ENCODE measurements at regions of chr2 and their contacts with region 1.

Region 1: GRCh38 chr2:42944779-42945415 is 152.5 kb upstream of the HAAO start:
- DNase-seq: peak; percentile 56
- H3K4me3 ChIP-seq: no peak overlapping the region
- H3K27ac ChIP-seq: no peak overlapping the region
- H3K4me1 ChIP-seq: peaks cover 1 to 3% of the 10 kb centered on the region in 2 experiments; a peak in 2 of 4 replicates
- H3K27me3 ChIP-seq: no peaks in the 10 kb centered on the region
- CTCF ChIP-seq: no peak
- EP300 ChIP-seq: no peak
- RAD21 ChIP-seq: no peak

Region 2: DNA sequence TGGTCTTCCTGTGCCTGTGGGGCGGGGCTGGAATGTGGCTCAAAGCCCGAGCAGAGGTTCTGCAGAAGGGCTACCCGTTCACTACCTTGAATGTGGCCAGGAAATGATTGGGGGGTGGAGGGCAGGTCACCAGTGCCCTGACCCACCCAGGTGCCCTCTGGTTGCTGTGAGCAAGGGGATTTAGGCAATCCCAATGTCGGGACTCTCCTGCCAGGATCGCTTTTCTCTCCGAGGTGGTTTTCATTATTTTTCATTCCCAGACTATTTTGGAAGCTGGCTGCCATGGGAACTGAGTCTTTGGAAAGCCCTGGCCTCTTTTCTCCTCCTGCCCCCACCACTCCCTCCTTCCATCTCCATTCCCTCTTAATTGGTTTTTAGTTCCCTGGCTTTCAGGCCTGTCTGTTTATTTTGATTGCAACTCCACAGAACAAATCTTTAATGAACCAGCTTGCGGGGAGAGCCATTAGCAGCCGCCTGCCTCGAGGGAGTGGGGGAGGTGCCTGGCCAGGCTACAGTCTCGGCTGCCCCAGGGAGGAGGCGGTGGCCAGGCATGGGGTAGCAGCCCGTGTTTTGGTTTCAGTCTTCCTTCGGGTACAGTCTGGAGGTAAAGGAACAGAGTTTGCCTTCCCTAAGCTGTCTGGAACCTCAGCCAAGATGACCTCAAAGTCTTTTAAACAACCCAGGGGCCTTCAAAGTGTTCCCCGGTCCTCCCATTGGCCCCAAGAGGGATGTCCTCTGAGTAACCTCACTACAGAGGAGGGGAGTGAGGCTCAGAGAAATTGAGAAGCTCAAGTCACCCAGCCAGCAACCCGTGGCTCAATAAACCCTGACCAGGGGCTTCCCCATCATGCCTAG is 38.1 kb before region 1 on chr2:
- CTCF ChIA-PET with region 1: interaction called, 21 read pairs
- POLR2A ChIA-PET with region 1: no interaction called
- DNase-seq: peak; percentile 85
- H3K4me3 ChIP-seq: no peak overlapping the region
- H3K27ac ChIP-seq: peak overlapping the region in 1 of 2 experiments; percentile 90; a peak in 2 of 4 replicates
- H3K4me1 ChIP-seq: peaks cover 10 to 40% of the 10 kb centered on the region in 2 experiments
- H3K27me3 ChIP-seq: no peaks in the 10 kb centered on the region
- CTCF ChIP-seq: no peak
- EP300 ChIP-seq: peak in 1 of 2 experiments; percentile 82; a peak in 1 of 4 replicates
- RAD21 ChIP-seq: no peak

Region 3: GRCh38 chr2:42964439-42965083 is 19.7 kb after region 1 on chr2:
- CTCF ChIA-PET with region 1: interaction called, 53 read pairs
- POLR2A ChIA-PET with region 1: no interaction called
- DNase-seq: no peak
- H3K4me3 ChIP-seq: no peak overlapping the region
- H3K27ac ChIP-seq: peak overlapping the region; percentile 43 to 85; a peak in 3 of 4 replicates
- H3K4me1 ChIP-seq: peaks cover 38 to 41% of the 10 kb centered on the region in 2 experiments; a peak in 3 of 4 replicates
- H3K27me3 ChIP-seq: no peaks in the 10 kb centered on the region
- CTCF ChIP-seq: no peak
- EP300 ChIP-seq: peak in 1 of 2 experiments; percentile 94; a peak in 2 of 4 replicates
- RAD21 ChIP-seq: no peak

Region 4: DNA sequence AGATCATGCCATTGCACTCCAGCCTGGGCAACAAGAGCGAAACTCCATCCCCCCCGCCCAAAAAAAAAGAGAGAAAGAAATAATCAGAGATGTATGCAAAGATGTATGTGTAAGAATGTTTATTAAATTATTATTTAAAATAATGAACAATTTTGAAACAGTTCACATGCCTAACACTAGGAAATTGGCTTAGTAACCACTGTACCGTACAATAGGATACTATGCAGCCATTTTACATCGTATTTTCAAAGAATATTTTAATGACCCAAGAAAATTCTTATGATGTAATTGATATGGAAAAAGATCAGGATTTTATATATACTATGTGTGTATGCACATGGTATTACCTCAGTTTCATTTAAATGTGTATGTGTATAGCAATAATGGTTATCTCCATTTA is 91.0 kb after region 1 on chr2:
- CTCF ChIA-PET with region 1: no interaction called
- POLR2A ChIA-PET with region 1: no interaction called
- DNase-seq: no peak
- H3K4me3 ChIP-seq: no peak overlapping the region
- H3K27ac ChIP-seq: no peak overlapping the region
- H3K4me1 ChIP-seq: peaks cover 17 to 23% of the 10 kb centered on the region in 2 experiments; a peak in 3 of 4 replicates
- H3K27me3 ChIP-seq: no peaks in the 10 kb centered on the region
- CTCF ChIP-seq: peak; percentile 24; the same call in 1 of the 2 replicates
- EP300 ChIP-seq: no peak
- RAD21 ChIP-seq: no peak

Region 5: DNA sequence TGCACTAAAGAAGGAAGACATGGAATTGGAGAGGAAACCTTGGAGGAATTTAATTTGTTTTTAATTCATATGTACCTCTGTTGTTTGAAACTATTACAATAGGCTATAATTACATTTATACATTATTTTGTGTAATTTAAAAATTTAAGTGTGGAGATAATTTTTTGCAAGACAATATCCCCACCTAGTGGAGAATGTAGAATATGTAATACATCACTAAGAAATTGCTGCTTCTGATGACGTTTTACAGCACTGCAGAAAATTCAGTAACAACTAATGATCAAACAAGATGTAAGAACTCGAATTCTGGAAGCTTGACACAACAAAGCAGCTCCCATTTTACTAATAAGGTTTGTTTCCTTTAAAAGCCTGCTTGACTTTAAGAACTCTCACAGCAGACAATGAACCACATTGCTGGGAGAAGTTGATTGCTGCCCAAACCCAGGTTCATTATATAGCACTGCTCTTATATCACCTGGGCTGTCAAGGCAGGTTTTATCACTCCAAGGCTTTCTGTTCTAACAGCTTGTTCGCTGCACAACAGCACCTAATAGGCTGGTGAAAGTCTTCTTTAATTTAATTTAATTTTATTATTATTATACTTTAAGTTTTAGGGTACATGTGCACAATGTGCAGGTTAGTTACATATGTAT is 597.5 kb after region 1 on chr2:
- CTCF ChIA-PET with region 1: interaction called, 62 read pairs
- POLR2A ChIA-PET with region 1: no interaction called
- DNase-seq: peak; percentile 52
- H3K4me3 ChIP-seq: no peak overlapping the region
- H3K27ac ChIP-seq: peak overlapping the region in 1 of 2 experiments; percentile 28; a peak in 1 of 4 replicates
- H3K4me1 ChIP-seq: peaks cover 8 to 13% of the 10 kb centered on the region in 2 experiments
- H3K27me3 ChIP-seq: no peaks in the 10 kb centered on the region
- CTCF ChIP-seq: peak; percentile 78
- EP300 ChIP-seq: no peak
- RAD21 ChIP-seq: peak; percentile 81

Region 6: DNA sequence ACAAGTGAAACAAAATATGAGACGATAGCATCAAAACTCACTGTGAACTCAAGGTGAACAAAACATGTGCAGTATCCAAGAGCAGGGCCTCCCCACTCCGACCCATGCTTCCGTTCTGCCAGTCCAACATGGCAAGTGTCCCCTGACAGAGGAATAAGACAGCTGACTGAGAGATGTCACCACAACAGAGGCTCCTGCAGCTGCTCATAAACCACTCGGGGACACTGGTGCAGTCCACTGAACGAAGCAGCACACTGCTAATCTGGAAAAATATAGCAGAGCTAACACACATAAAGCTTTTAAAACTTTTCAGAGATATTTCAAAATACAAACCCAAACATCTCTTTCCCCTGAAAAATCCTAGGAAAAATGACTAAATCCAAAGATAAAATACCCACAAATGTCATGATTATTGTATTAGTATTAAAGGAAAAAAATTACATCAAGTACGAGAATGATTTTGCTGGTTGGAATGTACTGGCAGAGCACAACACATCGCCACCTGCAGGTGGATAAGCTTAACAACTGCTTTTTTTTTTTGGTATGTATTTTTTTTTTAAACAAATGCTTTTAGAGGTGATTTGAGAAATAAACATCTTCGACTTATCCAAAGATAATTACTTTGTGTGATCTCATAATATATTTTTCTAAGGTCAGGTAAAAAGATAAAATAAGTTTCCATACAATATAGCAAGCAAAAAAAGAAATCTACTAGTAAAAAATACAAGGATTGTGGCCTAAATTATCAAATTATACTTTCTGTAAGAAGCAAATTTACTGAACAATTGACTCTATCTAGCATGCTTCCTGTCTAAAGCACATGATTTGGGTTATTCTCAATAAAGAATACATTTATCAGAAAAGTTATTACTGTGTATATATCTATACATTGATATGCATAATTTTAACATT is 632.3 kb after region 1 on chr2:
- CTCF ChIA-PET with region 1: interaction called, 25 read pairs
- POLR2A ChIA-PET with region 1: no interaction called
- DNase-seq: peak; percentile 49
- H3K4me3 ChIP-seq: no peak overlapping the region
- H3K27ac ChIP-seq: peak overlapping the region in 1 of 2 experiments; percentile 57; a peak in 1 of 4 replicates
- H3K4me1 ChIP-seq: no peaks in the 10 kb centered on the region
- H3K27me3 ChIP-seq: no peaks in the 10 kb centered on the region
- CTCF ChIP-seq: peak; percentile 99
- EP300 ChIP-seq: no peak
- RAD21 ChIP-seq: peak; percentile 68

Measured in SK-N-SH (cell line).